Body of pancreas (tissue), 4 donors: ENCODE measurements at regions of chr9 and their contacts with region 1.

Region 1: DNA sequence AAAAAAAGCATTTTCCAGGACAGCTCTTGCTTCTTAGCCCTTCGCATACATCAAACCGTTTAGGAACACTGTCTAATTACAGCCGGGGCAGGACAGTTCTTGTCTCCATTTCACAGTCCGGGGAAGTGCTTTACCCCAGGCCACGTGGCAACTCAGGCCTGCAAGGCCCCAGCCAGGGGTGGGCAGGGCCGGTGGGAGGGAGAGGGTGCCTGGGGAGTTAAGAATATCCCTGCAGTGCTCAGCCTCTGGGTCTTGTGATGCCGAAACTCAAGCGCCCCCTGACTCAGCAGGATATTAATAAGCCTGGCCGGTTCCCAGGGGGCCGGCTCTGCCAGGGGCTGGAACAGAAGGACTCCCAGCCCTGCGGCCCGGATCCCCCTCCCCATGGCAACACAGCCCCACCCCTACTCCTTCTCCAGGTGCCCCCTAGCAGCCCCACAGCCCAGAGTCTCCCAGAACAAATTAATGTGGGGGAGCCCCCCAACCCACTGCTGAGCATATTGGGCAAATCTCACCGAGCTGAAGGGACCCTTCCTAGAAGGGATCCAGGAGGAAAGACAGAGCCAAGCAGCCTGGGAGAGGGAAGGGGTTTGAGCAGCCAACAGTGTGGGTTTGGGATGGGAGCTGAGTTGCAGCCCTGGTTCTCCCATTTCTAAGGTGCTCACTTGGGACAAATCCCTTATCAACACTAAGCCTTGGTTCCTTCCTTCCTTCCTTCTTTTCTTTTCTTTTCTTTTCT is 45.3 kb downstream of the PLPP7 start:
- DNase-seq: no peak
- ATAC-seq: no peak
- H3K4me3 ChIP-seq: no peak overlapping the region
- H3K27ac ChIP-seq: no peak overlapping the region
- H3K4me1 ChIP-seq: no peaks in the 10 kb centered on the region
- H3K27me3 ChIP-seq: no peaks in the 10 kb centered on the region
- CTCF ChIP-seq: no peak
- POLR2A ChIP-seq: no peak

Region 2: DNA sequence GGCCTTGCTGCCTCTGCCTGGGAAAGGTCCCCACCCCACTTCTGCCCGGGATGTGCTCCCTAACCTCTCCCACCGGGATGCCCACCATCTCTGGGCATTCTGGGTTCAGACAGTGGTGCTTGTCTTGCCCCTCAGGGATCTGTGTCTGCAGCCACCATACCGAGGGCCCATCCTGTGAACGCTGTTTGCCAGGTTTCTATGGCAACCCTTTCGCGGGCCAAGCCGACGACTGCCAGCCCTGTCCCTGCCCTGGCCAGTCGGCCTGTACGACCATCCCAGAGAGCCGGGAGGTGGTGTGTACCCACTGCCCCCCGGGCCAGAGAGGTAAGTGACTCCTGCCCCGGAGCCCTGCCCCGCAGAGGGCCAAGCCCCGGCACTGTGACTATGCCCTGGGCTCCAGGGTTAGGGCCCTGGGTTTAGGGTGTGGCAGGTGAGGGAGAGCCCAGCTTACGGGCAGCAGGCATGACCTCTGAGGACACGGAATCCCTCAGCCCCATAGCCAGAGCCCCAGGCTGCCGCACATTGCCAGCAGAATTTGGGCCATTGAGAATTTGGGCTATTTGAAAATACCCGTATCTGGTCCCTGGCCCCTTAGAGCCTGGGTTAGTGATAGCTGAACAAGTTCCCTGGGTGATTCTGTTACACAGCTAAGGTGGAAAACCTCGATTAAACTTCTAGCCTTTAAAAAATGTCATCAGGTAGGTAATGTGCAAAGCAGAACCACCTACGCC is 273.7 kb before region 1 on chr9:
- intact Hi-C with region 1: loop called (anchors 5 kb)
- DNase-seq: no peak
- ATAC-seq: no peak
- H3K4me3 ChIP-seq: no peak overlapping the region
- H3K27ac ChIP-seq: no peak overlapping the region
- H3K4me1 ChIP-seq: no peaks in the 10 kb centered on the region
- H3K27me3 ChIP-seq: no peaks in the 10 kb centered on the region
- CTCF ChIP-seq: no peak
- POLR2A ChIP-seq: no peak

Region 3: DNA sequence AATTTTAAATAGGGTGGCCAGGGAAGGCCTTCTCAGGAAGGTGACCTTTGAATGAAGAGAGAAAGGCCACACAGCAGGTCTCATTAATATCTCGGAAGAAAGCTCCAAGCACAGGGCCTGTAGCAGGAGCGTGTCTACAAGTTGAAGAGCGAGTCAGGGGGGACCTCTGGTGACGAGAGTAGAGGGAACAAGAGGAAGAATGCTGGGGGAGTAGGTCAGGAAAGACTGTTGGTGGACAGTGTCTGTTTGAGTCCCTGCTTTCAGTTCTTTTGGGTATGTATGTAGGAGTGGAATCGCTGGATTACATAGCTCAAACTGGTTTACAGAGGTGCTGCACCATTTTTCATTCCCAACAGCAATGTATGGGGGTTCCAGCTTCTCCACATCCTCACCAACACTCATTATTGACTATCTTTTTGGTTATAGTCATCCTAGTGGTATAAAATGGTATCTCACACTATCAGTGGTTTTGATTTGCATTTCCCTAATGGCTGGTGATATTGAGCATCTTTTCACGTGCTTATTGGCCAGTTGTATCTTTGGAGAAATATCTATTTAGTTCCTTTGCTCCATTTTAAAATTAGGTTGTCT is 153.6 kb before region 1 on chr9:
- intact Hi-C with region 1: loop called (anchors 10 kb)
- DNase-seq: no peak
- ATAC-seq: no peak
- H3K4me3 ChIP-seq: no peak overlapping the region
- H3K27ac ChIP-seq: no peak overlapping the region
- H3K4me1 ChIP-seq: no peaks in the 10 kb centered on the region
- H3K27me3 ChIP-seq: no peaks in the 10 kb centered on the region
- CTCF ChIP-seq: no peak
- POLR2A ChIP-seq: no peak

Region 4: GRCh38 chr9:131382850-131383729 is 48.3 kb after region 1 on chr9:
- intact Hi-C with region 1: no loop called
- DNase-seq: peak; percentile 78 to 88 (median 86)
- ATAC-seq: peak; percentile 99
- H3K4me3 ChIP-seq: no peak overlapping the region
- H3K27ac ChIP-seq: peak overlapping the region; percentile 58 to 77 (median 74)
- H3K4me1 ChIP-seq: peaks cover 18% of the 10 kb centered on the region
- H3K27me3 ChIP-seq: no peaks in the 10 kb centered on the region
- CTCF ChIP-seq: peak in 1 of 7 experiments; percentile 23
- POLR2A ChIP-seq: peak in 2 of 3 donors; percentile 39 to 43